Tibial artery (tissue), 4 donors: ENCODE measurements at regions of chr17 and their contacts with region 1.

Region 1: DNA sequence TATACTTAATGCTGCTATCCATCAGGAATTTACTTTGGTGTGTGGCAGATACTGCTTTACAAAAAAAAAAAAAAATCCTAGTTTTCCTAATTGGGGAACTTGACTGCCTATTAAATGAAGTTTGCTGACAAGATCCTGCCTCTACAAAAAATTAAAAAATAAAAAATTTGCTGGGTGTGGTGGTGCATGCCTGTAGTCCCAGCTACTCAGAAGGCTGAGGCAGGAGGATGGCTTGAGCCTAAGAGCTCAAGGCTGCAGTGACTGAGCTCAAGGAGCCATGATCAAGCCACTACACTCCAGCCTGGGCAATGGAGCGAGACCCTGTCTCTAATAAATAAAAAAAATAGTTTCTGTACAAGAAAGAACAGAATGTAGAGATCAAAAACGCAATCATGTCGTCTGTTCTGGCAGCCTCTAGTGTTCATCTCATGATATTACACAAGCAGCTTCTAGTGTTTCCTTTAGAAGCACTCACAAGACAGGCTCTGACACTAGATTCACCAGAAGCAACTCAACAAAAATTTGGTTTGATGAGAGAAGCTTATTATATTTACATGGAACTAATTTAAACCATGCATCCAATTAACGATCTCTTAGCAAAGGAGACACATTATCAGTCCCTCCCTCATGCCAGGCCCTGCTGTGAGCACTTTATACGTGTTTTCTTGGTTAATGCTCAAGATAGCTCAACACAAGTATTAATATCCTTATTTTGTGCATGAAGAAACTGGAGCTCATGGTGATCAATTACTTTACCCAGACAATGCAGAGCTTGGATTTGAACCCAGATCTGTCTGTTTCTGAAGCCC is 6.8 kb upstream of the KRTAP17-1 start:
- DNase-seq: no peak
- H3K4me3 ChIP-seq: no peak overlapping the region
- H3K27ac ChIP-seq: no peak overlapping the region
- H3K4me1 ChIP-seq: no peaks in the 10 kb centered on the region
- H3K27me3 ChIP-seq: no peaks in the 10 kb centered on the region
- CTCF ChIP-seq: peak; percentile 59 to 72

Region 2: DNA sequence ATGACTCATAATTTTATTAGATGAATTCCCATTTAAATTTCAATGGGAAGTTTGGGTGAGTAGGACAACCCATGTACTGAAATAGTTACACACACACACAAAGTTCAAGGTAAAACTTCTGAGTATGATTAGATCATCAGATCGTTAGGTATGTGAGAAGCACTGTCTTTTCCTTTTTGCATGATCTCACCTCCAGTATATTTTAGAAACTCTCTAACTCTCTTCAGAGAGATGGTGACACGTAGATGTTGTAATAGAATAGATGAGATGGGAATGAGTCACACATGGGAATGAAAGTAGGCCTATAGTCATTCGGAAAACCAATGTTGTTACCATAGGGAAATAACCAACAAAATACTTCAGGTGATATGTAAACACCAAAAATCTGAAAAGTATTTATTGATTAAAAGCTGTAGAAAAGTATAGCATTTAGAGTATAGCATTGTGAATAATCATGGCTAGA is 407.1 kb before region 1 on chr17:
- intact Hi-C with region 1: loop called (anchors 10 kb)
- DNase-seq: no peak
- H3K4me3 ChIP-seq: no peak overlapping the region
- H3K27ac ChIP-seq: no peak overlapping the region
- H3K4me1 ChIP-seq: peaks cover 0 to 20% (median 10%) of the 10 kb centered on the region in 4 donors
- H3K27me3 ChIP-seq: no peaks in the 10 kb centered on the region
- CTCF ChIP-seq: no peak